ENCODE measurements at regions of chr6 and their contacts with region 1.

Region 1: GRCh38 chr6:130322673-130323268 is 43.0 kb upstream of the TMEM200A start:
- DNase-seq: peak; percentile 12 to 75 (median 46)
- H3K4me3 ChIP-seq: no peak overlapping the region
- H3K4me3 Mint-ChIP-seq: no peak overlapping the region
- H3K27ac ChIP-seq: no peak overlapping the region
- H3K27ac Mint-ChIP-seq: no peak overlapping the region
- H3K4me1 ChIP-seq: no peaks in the 10 kb centered on the region
- H3K4me1 Mint-ChIP-seq: peaks cover 2 to 7% (median 6%) of the 10 kb centered on the region in 3 donors
- H3K27me3 ChIP-seq: no peaks in the 10 kb centered on the region
- H3K27me3 Mint-ChIP-seq: no peaks in the 10 kb centered on the region

Region 2: DNA sequence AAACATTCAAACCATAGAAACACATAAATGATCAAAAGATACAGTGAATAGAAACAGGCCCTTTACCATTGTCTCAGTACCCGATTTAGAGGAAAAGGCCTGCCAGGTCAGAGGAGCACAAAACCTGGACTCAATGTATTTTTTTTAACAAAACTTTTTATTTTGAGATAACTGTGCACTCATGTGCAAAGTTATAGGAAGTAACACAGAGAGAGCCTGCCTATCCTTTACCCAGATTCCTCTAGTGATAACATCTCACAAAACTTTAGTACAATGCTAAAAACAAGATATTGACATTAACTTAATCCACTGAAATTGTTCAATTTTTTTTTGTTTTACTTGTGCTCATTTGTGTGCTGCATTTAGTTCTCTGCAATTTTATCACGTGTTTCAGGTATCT is 63.2 kb before region 1 on chr6:
- CTCF ChIA-PET with region 1: no interaction called
- POLR2A ChIA-PET with region 1: no interaction called
- DNase-seq: no peak
- H3K4me3 ChIP-seq: peak overlapping the region; percentile 27
- H3K4me3 Mint-ChIP-seq: peak overlapping the region; percentile 77 to 94 (median 88)
- H3K27ac ChIP-seq: peak overlapping the region; percentile 55
- H3K27ac Mint-ChIP-seq: peak overlapping the region; percentile 95 to 99 (median 98)
- H3K4me1 ChIP-seq: peaks cover 11% of the 10 kb centered on the region
- H3K4me1 Mint-ChIP-seq: peaks cover 49 to 69% (median 50%) of the 10 kb centered on the region in 3 donors
- H3K27me3 ChIP-seq: no peaks in the 10 kb centered on the region
- H3K27me3 Mint-ChIP-seq: peaks cover 3% of the 10 kb centered on the region in 2 donors

Region 3: DNA sequence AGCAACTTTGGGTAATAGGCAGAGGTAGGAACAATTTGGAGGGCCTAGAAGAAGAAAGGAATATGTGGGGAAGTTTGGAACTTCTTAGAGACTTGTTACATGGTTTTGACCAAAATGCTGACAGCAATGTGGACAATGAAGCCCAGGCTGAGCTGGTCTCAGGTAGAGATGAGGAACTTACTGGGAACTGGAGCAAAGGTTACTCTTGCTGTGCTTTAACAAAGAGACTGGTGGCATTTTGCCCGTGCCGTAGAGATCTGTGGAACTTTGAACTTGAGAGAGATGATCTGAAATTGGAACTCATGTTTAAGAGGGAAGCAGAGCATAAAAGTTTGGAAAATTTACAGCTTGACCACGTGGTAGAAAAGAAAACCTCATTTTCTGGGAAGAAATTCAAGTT is 14.8 kb after region 1 on chr6:
- CTCF ChIA-PET with region 1: no interaction called
- POLR2A ChIA-PET with region 1: no interaction called
- DNase-seq: no peak
- H3K4me3 ChIP-seq: no peak overlapping the region
- H3K4me3 Mint-ChIP-seq: no peak overlapping the region
- H3K27ac ChIP-seq: no peak overlapping the region
- H3K27ac Mint-ChIP-seq: no peak overlapping the region
- H3K4me1 ChIP-seq: no peaks in the 10 kb centered on the region
- H3K4me1 Mint-ChIP-seq: no peaks in the 10 kb centered on the region
- H3K27me3 ChIP-seq: no peaks in the 10 kb centered on the region
- H3K27me3 Mint-ChIP-seq: no peaks in the 10 kb centered on the region

Region 4: GRCh38 chr6:130381459-130382380 is 58.9 kb after region 1 on chr6:
- CTCF ChIA-PET with region 1: interaction called, 11 read pairs
- POLR2A ChIA-PET with region 1: no interaction called
- DNase-seq: peak; percentile 7 to 63 (median 34)
- H3K4me3 ChIP-seq: no peak overlapping the region
- H3K4me3 Mint-ChIP-seq: peak overlapping the region in 4 of 7 donors; percentile 1 to 7 (median 4)
- H3K27ac ChIP-seq: no peak overlapping the region
- H3K27ac Mint-ChIP-seq: peak overlapping the region in 4 of 8 donors; percentile 10 to 64 (median 26)
- H3K4me1 ChIP-seq: peaks cover 14% of the 10 kb centered on the region
- H3K4me1 Mint-ChIP-seq: peaks cover 16 to 31% (median 28%) of the 10 kb centered on the region in 3 donors
- H3K27me3 ChIP-seq: no peaks in the 10 kb centered on the region
- H3K27me3 Mint-ChIP-seq: peaks cover 0 to 2% of the 10 kb centered on the region in 2 donors

Region 5: DNA sequence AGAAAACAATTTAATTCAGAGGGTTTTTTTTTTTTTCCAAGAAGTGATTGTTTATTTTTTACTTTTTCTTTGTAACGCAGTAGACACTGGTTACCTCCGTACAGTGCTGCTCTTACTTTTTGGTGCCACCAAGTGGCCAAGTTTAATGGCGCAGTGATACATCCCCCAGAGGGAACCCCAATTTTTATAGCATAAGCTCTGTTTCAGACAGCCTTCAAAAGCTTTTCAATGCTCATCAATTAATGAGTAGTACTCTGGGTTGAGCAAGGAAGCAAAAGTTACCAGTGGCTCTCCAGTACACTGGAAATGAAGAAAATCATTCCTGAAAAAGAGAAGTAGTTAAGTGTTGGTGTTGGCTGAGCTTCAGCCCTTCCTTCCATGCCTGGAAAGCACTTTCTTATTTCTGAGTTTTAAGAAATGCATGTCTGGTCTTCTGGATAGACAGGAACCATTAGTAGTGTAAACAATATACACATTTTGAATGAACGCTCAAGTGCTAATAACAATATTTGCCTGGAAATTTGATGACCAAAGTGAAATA is 375.3 kb after region 1 on chr6:
- CTCF ChIA-PET with region 1: interaction called, 28 read pairs
- POLR2A ChIA-PET with region 1: no interaction called
- DNase-seq: peak in 4 of 5 donors; percentile 24 to 61 (median 33)
- H3K4me3 ChIP-seq: no peak overlapping the region
- H3K4me3 Mint-ChIP-seq: peak overlapping the region in 5 of 7 donors; percentile 12 to 54 (median 45)
- H3K27ac ChIP-seq: no peak overlapping the region
- H3K27ac Mint-ChIP-seq: peak overlapping the region in 1 of 8 donors; percentile 15
- H3K4me1 ChIP-seq: peaks cover 28% of the 10 kb centered on the region
- H3K4me1 Mint-ChIP-seq: peaks cover 26 to 60% (median 54%) of the 10 kb centered on the region in 3 donors
- H3K27me3 ChIP-seq: no peaks in the 10 kb centered on the region
- H3K27me3 Mint-ChIP-seq: peaks cover 0 to 2% of the 10 kb centered on the region in 2 donors

Region 6: GRCh38 chr6:130847001-130847910 is 524.5 kb after region 1 on chr6:
- CTCF ChIA-PET with region 1: interaction called, 14 read pairs
- POLR2A ChIA-PET with region 1: no interaction called
- DNase-seq: no peak
- H3K4me3 ChIP-seq: no peak overlapping the region
- H3K4me3 Mint-ChIP-seq: no peak overlapping the region
- H3K27ac ChIP-seq: no peak overlapping the region
- H3K27ac Mint-ChIP-seq: peak overlapping the region in 2 of 8 donors; percentile 73 to 74
- H3K4me1 ChIP-seq: no peaks in the 10 kb centered on the region
- H3K4me1 Mint-ChIP-seq: peaks cover 6 to 15% (median 9%) of the 10 kb centered on the region in 3 donors
- H3K27me3 ChIP-seq: no peaks in the 10 kb centered on the region
- H3K27me3 Mint-ChIP-seq: peaks cover 0 to 2% of the 10 kb centered on the region in 2 donors

Region 7: GRCh38 chr6:130872250-130873095 is 549.7 kb after region 1 on chr6:
- CTCF ChIA-PET with region 1: interaction called, 14 read pairs
- POLR2A ChIA-PET with region 1: no interaction called
- DNase-seq: peak; percentile 29 to 75 (median 59)
- H3K4me3 ChIP-seq: no peak overlapping the region
- H3K4me3 Mint-ChIP-seq: no peak overlapping the region
- H3K27ac ChIP-seq: no peak overlapping the region
- H3K27ac Mint-ChIP-seq: peak overlapping the region in 2 of 8 donors; percentile 33 to 49
- H3K4me1 ChIP-seq: no peaks in the 10 kb centered on the region
- H3K4me1 Mint-ChIP-seq: peaks cover 3 to 5% (median 5%) of the 10 kb centered on the region in 3 donors
- H3K27me3 ChIP-seq: no peaks in the 10 kb centered on the region
- H3K27me3 Mint-ChIP-seq: peaks cover 0 to 2% of the 10 kb centered on the region in 2 donors